ENCODE measurements at regions of chr11 and their contacts with region 1.

Region 1: DNA sequence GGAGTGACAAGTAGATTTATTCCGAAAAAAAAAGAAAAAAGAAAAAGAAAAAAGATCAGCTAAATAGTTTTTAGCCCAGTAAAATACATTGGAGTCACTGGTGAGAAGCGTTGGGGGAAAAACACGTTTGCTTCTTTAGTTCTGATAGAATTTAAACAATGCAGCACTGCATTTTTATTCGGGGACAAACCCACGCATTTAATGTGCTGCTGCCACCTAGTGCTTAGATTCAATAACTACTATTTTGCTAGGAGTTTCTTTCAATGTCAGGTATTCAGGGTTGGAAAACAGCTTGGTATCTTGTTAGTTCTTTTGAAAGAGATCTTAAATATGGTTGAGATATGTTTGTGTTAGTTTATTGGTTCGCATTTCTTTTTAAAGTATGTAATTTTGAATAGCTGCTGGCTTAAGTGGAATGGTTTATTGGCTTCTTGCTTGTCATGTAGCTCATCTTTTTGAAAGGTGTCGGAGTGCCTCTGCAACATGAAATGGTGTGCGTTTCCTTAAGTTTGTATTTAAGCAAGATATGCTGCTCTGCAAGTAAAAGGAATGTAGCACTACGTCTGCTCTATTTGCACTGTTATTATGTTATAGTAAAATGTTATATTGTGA is 41.9 kb downstream of the SVIP start:
- DNase-seq: peak; percentile 28
- CTCF ChIP-seq: peak; percentile 59

Region 2: DNA sequence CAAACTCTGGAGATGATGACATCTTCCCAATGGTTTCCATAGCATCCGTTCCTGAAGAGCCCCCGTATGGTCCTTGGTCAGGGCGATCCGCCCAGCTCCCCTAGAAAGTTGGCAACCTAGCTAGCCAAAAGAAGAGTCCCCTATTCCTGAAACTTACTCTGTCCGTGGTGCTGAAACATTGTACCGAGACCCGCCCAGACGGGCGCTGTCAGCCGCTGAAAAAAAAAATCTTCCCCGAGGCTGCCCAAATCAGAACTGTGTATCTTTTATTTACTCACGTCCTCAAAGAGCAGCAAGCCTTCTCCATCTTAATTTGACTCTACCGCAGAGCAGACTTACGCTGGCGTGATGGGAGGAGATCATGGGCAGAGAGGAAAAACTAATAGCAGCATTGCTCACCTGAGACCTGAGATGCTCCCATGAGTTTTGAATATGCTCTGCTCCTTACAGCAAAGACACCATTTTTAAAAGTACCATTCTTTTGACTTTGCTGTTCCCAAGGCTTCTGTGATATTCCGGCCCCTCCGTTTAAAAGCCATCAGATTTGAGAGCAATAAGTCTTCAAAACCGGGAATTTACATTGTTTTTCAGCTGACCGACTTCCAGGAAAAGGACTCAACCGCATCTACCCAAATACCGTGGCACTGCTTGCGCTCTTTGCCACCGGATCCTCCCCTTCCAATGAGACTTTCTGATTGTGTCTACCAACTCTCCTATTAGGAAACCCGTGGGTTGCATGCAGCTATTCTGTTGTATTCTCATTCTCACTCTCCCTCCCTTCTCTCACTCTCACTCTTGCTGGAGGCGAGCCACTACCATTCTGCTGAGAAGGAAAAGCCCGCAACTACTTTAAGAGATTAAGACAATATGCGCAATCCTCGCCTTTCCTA is 449.8 kb before region 1 on chr11 and contains the start of gene SLC17A6:
- CTCF ChIA-PET with region 1: interaction called, 17 read pairs
- POLR2A ChIA-PET with region 1: no interaction called
- DNase-seq: peak; percentile 30
- CTCF ChIP-seq: no peak

Region 3: GRCh38 chr11:22472306-22472705 is 315.4 kb before region 1 on chr11:
- CTCF ChIA-PET with region 1: no interaction called
- POLR2A ChIA-PET with region 1: no interaction called
- DNase-seq: no peak
- CTCF ChIP-seq: no peak

Region 4: DNA sequence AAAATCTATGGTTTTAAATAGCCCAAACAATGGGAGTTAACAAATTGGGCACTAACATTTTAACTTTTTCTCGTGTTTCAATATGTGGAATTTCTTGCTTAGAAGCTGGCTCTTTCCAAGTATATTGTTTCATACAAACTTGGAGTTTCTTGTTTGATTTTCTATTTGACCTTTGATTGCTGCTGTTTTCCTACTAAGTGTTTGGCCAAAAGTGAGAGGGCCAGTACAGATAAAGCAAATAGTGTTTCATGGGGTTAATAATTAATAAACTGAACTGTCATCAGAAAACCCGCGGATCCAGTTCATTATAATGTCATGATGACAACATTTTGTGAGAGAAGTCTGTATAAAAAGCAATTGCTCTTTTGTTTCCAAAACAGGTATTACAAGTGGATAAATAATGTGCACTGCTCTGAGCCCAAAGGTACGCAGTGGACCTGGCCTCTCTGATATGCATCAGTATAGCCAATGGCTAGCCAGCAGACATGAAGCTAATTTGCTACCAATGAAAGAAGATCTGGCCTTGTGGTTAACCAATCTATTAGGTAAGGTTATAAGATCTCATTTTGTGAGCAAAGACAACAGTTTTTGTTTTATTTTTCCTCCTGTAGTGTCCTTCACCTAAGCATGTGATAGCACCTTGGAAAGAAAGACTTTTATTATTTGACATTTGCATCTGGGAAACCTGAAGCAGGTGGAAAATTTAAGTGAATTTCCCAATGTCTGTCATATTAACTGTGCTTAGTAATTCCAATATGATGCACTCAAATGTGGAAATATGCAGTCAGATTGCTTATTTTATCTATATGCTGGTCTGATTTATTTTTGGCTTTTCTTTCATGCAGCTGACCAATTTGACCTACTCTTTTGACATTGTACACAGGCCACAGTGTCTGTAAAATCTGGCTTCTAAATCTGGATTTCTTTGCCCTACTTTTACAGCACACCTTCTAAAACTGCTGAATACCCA is 112.9 kb before region 1 on chr11:
- CTCF ChIA-PET with region 1: interaction called, 17 read pairs
- POLR2A ChIA-PET with region 1: no interaction called
- DNase-seq: no peak
- CTCF ChIP-seq: no peak

Region 5: DNA sequence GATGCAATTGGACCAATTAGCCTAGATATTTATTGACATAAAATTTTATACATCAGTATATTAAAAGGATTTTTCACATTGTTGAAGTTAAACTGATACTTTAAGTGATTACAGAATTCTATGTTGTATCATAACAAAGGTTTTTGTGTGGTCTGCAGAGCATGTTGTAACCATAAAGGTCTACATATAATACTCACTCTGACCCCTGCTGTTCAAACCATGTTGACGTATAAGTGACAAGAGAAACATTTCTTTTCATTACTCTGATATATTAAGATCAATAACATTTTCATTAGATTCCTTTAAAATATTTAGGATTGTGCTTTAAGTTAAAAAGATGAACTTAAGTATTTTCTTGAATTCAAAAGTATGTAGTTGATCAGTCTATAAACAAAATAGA is 57.3 kb before region 1 on chr11:
- CTCF ChIA-PET with region 1: no interaction called
- POLR2A ChIA-PET with region 1: no interaction called
- DNase-seq: no peak
- CTCF ChIP-seq: peak; percentile 36

Region 6: DNA sequence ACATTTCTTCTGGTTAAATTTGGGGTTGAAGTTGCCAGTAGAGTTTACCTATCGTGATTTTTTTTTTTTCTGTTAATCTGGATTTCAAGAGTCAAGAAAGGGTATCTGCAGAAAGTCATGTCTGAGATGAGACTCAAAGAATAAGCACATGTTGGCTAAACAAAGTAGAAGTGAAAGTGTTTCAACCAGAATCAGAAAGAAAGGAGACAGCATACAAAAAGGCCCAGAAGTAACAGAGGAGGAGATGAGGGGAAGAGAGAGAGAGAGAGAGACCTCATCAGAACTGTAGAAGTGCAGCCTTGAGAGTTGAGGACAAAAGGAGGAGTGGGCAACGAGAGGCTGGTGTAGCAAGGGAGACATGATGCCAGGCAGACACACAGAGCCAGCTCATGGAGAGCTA is 12.9 kb before region 1 on chr11:
- CTCF ChIA-PET with region 1: interaction called, 23 read pairs
- POLR2A ChIA-PET with region 1: no interaction called
- DNase-seq: peak; percentile 39
- CTCF ChIP-seq: no peak

Region 7: DNA sequence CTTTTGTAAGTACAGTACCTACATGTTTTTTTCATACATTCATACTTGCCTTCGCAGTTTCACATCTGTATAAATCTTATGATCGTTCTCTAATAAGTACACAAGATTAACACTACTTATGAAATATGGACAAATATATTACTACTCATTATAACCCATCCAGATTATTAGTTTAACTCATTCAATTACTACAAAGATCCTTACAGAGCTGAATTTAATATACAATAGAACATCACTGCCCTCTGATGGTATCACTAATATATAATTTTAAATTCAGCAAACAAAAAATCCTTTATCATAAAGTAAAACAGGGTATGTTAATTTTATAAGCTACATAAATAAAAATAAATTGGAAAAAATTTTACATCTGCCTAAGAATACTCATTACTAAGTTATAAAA is 34.5 kb after region 1 on chr11:
- CTCF ChIA-PET with region 1: interaction called, 10 read pairs
- POLR2A ChIA-PET with region 1: no interaction called
- DNase-seq: no peak
- CTCF ChIP-seq: no peak